ENCODE measurements at regions of chr9 and their contacts with region 1.

Region 1: GRCh38 chr9:121074635-121075385 is at the start of gene CNTRL:
- DNase-seq: peak; percentile 89
- H3K4me3 ChIP-seq: peak within 1 kb of the TSS; percentile 57 to 92 (median 69)
- H3K27ac ChIP-seq: peak within 1 kb of the TSS; percentile 86
- H3K4me1 ChIP-seq: peaks cover 28% of the 10 kb centered on the region
- H3K27me3 ChIP-seq: no peaks in the 10 kb centered on the region
- CTCF ChIP-seq: no peak
- total RNA-seq, gene CNTRL: 7.2 to 15.0 TPM

Region 2: DNA sequence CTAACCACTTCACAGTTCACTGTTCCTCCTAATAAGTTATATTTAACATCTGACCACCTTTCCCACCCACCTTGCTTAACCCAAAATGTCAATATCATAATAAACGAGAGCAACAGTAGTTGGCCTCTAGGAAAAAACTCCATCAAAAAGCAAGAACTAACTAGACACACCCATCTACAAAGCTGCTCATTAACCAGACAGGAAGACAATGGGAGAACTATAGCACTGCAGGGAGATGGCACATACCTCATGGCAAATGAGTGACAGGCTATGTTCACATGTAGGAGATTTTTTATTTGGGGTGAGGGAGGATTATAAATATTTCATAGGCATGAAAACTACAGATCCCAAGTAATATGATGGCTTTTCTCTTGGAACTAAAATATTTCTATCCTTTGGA is 471.2 kb before region 1 on chr9:
- CTCF ChIA-PET with region 1: no interaction called
- dilution Hi-C with region 1: no loop called
- in situ Hi-C with region 1: no loop called
- intact Hi-C with region 1: no loop called
- DNase-seq: no peak
- H3K4me3 ChIP-seq: no peak overlapping the region
- H3K27ac ChIP-seq: no peak overlapping the region
- H3K4me1 ChIP-seq: peaks cover 13% of the 10 kb centered on the region
- H3K27me3 ChIP-seq: no peaks in the 10 kb centered on the region
- CTCF ChIP-seq: no peak

Region 3: GRCh38 chr9:120755827-120756434 is 318.9 kb before region 1 on chr9:
- CTCF ChIA-PET with region 1: no interaction called
- dilution Hi-C with region 1: no loop called
- in situ Hi-C with region 1: loop called in 1 of 2 experiments (anchors 25 kb)
- intact Hi-C with region 1: no loop called
- DNase-seq: peak; percentile 35
- H3K4me3 ChIP-seq: no peak overlapping the region
- H3K27ac ChIP-seq: no peak overlapping the region
- H3K4me1 ChIP-seq: no peaks in the 10 kb centered on the region
- H3K27me3 ChIP-seq: no peaks in the 10 kb centered on the region
- CTCF ChIP-seq: peak; percentile 87

Region 4: DNA sequence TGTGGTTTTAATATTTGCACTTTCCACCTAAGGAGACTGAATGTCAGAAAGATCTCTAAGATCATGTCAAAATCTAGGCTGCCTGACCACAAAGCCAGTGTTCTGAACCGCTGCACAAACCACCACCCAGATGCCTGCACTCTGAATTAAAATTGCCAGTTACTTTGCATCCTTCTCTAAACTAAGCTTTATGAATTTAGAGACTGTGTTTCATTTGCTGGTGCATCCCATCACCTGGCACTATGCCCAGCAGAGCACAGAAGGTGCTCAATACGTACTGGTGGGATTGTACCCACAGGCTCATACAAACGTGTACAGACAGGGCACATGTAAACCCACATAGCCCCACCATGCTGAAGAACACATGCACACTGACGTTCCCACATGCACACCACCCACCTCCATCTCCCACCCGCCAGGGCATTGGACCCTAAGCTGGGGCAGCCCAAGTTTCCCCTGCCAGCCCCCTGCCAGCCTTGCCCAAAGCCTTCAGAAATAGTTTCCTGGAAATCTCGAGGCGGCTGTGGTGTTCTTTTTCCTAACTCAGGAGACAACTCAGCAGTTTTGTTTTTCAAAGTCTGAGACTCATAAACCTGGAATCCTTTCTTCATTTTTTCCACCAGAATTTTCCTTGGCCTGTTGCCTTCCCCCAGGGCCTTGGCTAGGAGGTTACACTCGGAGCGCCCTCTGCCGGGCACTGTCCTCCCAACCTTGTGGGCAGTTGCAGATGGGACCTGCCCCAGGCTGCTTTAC is 138.6 kb before region 1 on chr9:
- CTCF ChIA-PET with region 1: no interaction called
- dilution Hi-C with region 1: no loop called
- in situ Hi-C with region 1: no loop called
- intact Hi-C with region 1: loop called (anchors 1 kb)
- DNase-seq: peak; percentile 89
- H3K4me3 ChIP-seq: peak overlapping the region; percentile 10 to 34 (median 16)
- H3K27ac ChIP-seq: peak overlapping the region; percentile 84
- H3K4me1 ChIP-seq: peaks cover 44% of the 10 kb centered on the region
- H3K27me3 ChIP-seq: no peaks in the 10 kb centered on the region
- CTCF ChIP-seq: peak; percentile 88 to 96

Region 5: DNA sequence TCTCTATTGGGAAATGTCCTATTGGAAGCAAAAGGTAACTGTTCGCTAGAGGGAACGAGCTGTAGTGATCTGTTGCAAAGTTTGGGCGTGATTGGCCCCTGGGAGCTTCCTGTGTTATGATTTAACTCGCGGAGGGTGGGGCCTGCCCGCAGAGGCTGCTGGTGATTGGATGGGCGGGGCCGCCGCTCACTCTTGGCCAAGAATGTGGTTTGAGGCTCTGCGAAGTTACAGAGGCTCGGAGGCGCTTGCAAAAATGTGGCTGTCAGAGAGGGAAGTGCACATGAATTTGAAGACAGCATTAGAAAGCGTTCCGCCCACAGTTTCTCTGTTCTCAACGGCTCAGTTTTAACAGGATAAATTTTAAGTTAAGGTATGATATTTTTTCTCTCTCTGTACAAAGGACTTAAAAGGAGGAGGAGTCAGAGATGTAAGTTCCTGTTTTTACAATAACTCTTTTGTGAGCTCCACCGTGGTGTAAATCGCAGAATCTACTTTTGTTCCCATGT is 46.8 kb after region 1 on chr9:
- CTCF ChIA-PET with region 1: no interaction called
- dilution Hi-C with region 1: no loop called
- in situ Hi-C with region 1: no loop called
- intact Hi-C with region 1: loop called (anchors 1 kb)
- DNase-seq: peak; percentile 96
- H3K4me3 ChIP-seq: peak overlapping the region; percentile 49 to 88 (median 58)
- H3K27ac ChIP-seq: peak overlapping the region; percentile 71
- H3K4me1 ChIP-seq: peaks cover 11% of the 10 kb centered on the region
- H3K27me3 ChIP-seq: no peaks in the 10 kb centered on the region
- CTCF ChIP-seq: peak in 1 of 2 donors; percentile 37

Region 6: GRCh38 chr9:121201738-121202533 is 127.1 kb after region 1 on chr9 and contains the start of gene RAB14:
- CTCF ChIA-PET with region 1: no interaction called
- dilution Hi-C with region 1: no loop called
- in situ Hi-C with region 1: no loop called
- intact Hi-C with region 1: loop called (anchors 2 kb)
- DNase-seq: peak; percentile 97
- H3K4me3 ChIP-seq: peak within 1 kb of the TSS; percentile 69 to 97 (median 85)
- H3K27ac ChIP-seq: peak within 1 kb of the TSS; percentile 64
- H3K4me1 ChIP-seq: peaks cover 28% of the 10 kb centered on the region
- H3K27me3 ChIP-seq: no peaks in the 10 kb centered on the region
- CTCF ChIP-seq: peak; percentile 26 to 68
- total RNA-seq, gene RAB14: 27.5 to 74.6 TPM

Measured in mammary epithelial cell (primary cell).